Left lung (tissue), 14 donors: ENCODE measurements at regions of chr19 and their contacts with region 1.

Region 1: GRCh38 chr19:21151460-21151859 is 9.6 kb downstream of the ZNF431 start:
- DNase-seq: no peak
- ATAC-seq: no peak
- H3K4me3 ChIP-seq: no peak overlapping the region
- H3K27ac ChIP-seq: no peak overlapping the region
- H3K4me1 ChIP-seq: no peaks in the 10 kb centered on the region
- H3K27me3 ChIP-seq: no peaks in the 10 kb centered on the region
- CTCF ChIP-seq: no peak

Region 2: DNA sequence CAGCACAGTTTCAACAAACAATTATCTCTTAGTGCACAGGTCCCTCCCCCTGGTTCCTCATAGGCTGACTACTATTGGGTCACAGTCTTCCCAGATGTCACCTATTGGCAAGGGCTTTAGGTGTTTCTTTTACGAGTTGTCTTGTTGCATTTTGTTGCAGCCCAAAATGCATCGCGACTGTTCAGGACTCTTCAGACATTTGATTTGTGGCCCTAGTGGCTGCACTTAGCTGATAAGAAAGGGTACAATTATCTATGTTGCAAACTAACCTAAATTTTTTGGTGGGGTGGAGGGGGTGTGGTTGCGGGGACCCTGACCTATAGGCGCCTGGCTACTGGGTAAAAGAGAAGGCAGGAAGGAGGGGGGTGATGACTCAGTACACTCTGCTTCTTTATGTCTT is 98.6 kb before region 1 on chr19:
- intact Hi-C with region 1: no loop called
- DNase-seq: no peak
- ATAC-seq: no peak
- H3K4me3 ChIP-seq: no peak overlapping the region
- H3K27ac ChIP-seq: no peak overlapping the region
- H3K4me1 ChIP-seq: no peaks in the 10 kb centered on the region
- H3K27me3 ChIP-seq: no peaks in the 10 kb centered on the region
- CTCF ChIP-seq: no peak

Region 3: GRCh38 chr19:21065336-21065735 is 86.1 kb before region 1 on chr19:
- intact Hi-C with region 1: no loop called
- DNase-seq: no peak
- ATAC-seq: no peak
- H3K4me3 ChIP-seq: no peak overlapping the region
- H3K27ac ChIP-seq: no peak overlapping the region
- H3K4me1 ChIP-seq: no peaks in the 10 kb centered on the region
- H3K27me3 ChIP-seq: no peaks in the 10 kb centered on the region
- CTCF ChIP-seq: no peak

Region 4: GRCh38 chr19:21092109-21092508 is 59.4 kb before region 1 on chr19:
- intact Hi-C with region 1: loop called in 1 of 2 experiments (anchors 1 kb)
- DNase-seq: peak in 1 of 4 donors; percentile 10
- ATAC-seq: peak; percentile 44
- H3K4me3 ChIP-seq: no peak overlapping the region
- H3K27ac ChIP-seq: no peak overlapping the region
- H3K4me1 ChIP-seq: no peaks in the 10 kb centered on the region
- H3K27me3 ChIP-seq: no peaks in the 10 kb centered on the region
- CTCF ChIP-seq: no peak